ENCODE measurements at regions of chr1 and their contacts with region 1.

Region 1: GRCh38 chr1:245079021-245079609 is 75.7 kb upstream of the KIF26B start:
- DNase-seq: peak; percentile 82
- ATAC-seq: peak; percentile 57
- H3K4me3 ChIP-seq: no peak overlapping the region
- H3K27ac ChIP-seq: no peak overlapping the region
- H3K4me1 ChIP-seq: peaks cover 6% of the 10 kb centered on the region; the same call in 1 of the 2 replicates
- H3K27me3 ChIP-seq: no peaks in the 10 kb centered on the region
- CTCF ChIP-seq: peak; percentile 89

Region 2: DNA sequence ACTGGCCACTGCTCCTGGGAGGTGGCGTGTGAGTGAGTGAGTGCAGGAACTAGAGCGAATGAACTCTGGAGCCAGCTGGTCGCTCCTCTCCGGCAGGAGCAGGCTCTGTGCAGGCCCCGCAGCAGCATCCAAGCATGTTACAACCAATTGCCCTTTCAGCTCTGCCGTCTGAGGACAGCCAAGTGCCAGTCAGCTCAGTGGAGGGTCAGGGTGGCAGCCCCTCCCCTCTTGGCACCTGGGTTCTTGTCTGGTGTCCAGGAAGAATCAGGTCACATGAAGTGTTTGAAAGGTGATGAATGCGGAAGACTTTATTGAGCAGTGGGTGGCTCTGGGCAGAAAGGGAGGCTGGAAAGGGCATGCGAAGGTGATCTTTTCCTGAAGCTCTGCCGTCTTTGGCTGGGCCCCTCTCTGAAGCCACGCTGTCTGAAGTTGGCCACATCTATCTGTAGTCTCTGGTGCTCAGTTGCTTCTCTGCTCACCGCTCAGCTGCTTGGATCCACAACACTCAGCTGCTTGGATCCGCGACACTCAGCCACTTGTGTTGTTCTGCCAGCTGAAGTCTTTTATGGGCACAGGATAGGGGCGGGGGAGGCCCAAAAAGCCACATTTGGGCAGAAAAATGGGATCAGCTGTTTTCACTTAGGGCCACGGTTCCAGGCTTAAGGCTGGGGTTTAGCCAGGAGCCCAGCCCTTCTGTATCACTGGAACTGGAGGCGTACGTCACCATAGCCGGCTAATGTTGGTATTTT is 767.2 kb before region 1 on chr1:
- CTCF ChIA-PET with region 1: no interaction called
- POLR2A ChIA-PET with region 1: no interaction called
- intact Hi-C with region 1: no loop called
- DNase-seq: no peak
- ATAC-seq: no peak
- H3K4me3 ChIP-seq: no peak overlapping the region
- H3K27ac ChIP-seq: no peak overlapping the region
- H3K4me1 ChIP-seq: no peaks in the 10 kb centered on the region
- H3K27me3 ChIP-seq: no peaks in the 10 kb centered on the region
- CTCF ChIP-seq: no peak

Region 3: DNA sequence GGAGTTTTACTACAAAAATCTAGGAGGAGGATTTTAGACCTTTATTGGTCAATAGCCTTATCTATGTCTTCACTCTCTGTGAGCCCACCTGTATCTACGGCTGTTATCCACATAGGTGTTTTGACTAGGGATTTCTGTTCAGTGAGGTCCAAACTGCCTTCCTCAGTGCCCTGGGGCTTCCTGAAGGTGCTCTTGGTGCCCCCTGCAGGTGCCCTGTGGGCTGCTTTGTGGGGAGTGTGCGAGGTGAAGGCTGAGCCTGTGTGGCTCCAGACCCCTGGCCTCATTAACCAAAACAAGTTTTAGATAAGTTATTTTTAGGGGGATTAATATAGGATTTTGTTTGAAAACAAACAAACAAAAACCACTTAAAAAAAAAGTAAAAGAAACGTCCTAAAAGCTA is 198.2 kb after region 1 on chr1:
- CTCF ChIA-PET with region 1: no interaction called
- POLR2A ChIA-PET with region 1: no interaction called
- intact Hi-C with region 1: loop called (anchors 10 kb)
- DNase-seq: peak; percentile 23
- ATAC-seq: 0 out of 2 replicates have a peak, but pooled peaks have one; percentile 27
- H3K4me3 ChIP-seq: no peak overlapping the region
- H3K27ac ChIP-seq: no peak overlapping the region
- H3K4me1 ChIP-seq: no peaks in the 10 kb centered on the region
- H3K27me3 ChIP-seq: peaks cover 35% of the 10 kb centered on the region
- CTCF ChIP-seq: peak; percentile 54

Measured in PC-3 (cell line).